ENCODE measurements at regions of chr11 and their contacts with region 1.

Region 1: GRCh38 chr11:12802418-12803085 is 128.3 kb downstream of the TEAD1 start:
- DNase-seq: peak; percentile 98 to 99
- H3K4me3 ChIP-seq: peak overlapping the region; percentile 13
- H3K4me3 Mint-ChIP-seq: peak overlapping the region; percentile 71
- H3K27ac Mint-ChIP-seq: peak overlapping the region; percentile 98
- H3K4me1 ChIP-seq: peaks cover 86% of the 10 kb centered on the region
- H3K4me1 Mint-ChIP-seq: peaks cover 89% of the 10 kb centered on the region
- H3K27me3 ChIP-seq: no peaks in the 10 kb centered on the region
- H3K27me3 Mint-ChIP-seq: no peaks in the 10 kb centered on the region
- CTCF ChIP-seq: no peak

Region 2: GRCh38 chr11:12673924-12674570 is 128.5 kb before region 1 on chr11 and contains the start of gene TEAD1:
- CTCF ChIA-PET with region 1: no interaction called
- POLR2A ChIA-PET with region 1: interaction called, 3 read pairs
- intact Hi-C with region 1: loop called (anchors 2 kb)
- DNase-seq: peak; percentile 97 to 100
- H3K4me3 ChIP-seq: peak within 1 kb of the TSS; percentile 81
- H3K4me3 Mint-ChIP-seq: peak within 1 kb of the TSS; percentile 79
- H3K27ac Mint-ChIP-seq: peak within 1 kb of the TSS; percentile 91
- H3K4me1 ChIP-seq: peaks cover 20% of the 10 kb centered on the region; the same call in 1 of the 2 replicates
- H3K4me1 Mint-ChIP-seq: peaks cover 32% of the 10 kb centered on the region
- H3K27me3 ChIP-seq: no peaks in the 10 kb centered on the region
- H3K27me3 Mint-ChIP-seq: no peaks in the 10 kb centered on the region
- CTCF ChIP-seq: no peak
- total RNA-seq, gene TEAD1: 134 and 144 TPM in 2 replicates

Region 3: DNA sequence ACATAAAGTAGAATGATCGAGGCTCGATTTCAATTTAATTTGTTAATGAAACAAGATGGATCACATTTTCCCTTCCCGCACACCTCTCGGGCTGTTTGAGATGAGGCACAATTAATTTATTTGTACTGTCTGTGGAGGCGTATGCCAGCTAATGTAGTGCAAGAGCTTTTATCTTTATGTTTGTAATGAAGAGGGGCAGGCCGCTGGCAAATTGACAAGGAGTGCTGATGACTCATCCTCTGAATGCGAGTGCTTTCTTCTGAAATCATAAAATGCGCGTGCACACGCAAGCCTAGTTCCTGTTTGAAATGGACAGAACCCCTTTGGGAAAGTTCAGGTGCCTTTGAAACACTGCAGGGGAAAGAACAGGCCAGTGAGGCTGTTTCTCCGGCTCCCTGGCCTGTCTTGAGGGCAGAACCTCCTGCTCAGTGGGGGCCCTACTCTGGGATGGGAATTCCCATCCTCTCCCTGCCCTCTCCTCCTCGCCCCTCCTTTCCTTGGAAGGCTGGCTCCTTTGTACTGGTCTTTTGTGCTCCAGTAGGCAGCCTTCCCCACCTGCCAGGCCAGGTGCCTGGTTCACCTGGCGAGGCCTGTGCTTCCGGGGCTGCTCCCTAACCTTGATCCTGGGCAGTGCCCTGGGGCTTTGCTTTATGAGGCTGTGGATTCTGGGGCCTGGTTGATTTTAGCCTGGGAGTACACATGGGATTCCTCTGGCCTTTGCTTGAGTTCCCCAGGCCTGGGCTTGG is 78.1 kb before region 1 on chr11:
- CTCF ChIA-PET with region 1: interaction called, 5 read pairs
- POLR2A ChIA-PET with region 1: no interaction called
- intact Hi-C with region 1: loop called (anchors 1 kb)
- DNase-seq: peak; percentile 36 to 61
- H3K4me3 ChIP-seq: no peak overlapping the region
- H3K4me3 Mint-ChIP-seq: peak overlapping the region; percentile 78
- H3K27ac Mint-ChIP-seq: peak overlapping the region; percentile 96
- H3K4me1 ChIP-seq: peaks cover 76% of the 10 kb centered on the region
- H3K4me1 Mint-ChIP-seq: peaks cover 82% of the 10 kb centered on the region
- H3K27me3 ChIP-seq: no peaks in the 10 kb centered on the region
- H3K27me3 Mint-ChIP-seq: no peaks in the 10 kb centered on the region
- CTCF ChIP-seq: no peak

Region 4: DNA sequence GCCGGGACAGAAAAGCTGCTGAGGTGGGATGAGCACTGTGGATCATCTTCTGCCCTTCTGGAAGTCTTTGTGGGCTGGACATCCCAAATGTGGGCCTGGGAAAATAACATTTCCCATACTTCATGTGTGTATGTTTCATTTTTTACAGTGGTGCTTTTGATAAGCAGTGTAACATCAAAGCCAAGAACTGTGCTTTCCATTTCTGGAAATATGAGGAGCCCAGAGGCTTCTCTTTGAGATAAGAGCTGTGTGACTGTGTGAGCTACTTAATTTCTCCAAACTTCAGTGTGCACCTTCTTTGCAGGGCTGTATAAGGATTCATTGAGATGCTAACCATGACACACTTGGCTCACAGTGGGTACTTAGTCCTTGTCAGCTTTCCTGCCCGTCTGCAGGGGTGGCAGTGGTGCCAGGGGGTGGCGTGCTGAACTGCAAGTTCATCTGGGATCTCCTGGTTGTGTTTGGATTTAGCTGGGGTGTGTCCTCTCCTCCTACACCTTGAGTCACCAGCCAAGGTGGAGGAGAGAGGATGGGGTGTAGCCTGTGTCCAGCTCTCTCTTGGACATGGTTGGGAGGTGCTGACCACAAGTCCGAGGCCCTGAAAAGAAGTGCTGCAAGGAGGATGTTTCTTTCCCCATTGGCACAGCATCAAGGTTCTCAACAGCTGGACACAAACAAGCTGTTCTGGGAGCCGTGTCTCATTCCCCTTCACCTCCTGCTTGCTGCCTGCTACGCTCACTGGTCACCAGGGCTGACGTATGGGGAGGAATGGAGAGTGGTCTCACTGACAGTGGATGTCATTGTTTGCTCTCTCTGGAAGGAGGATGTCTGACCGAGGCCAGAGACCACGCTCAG is 11.0 kb after region 1 on chr11:
- CTCF ChIA-PET with region 1: interaction called, 3 read pairs
- POLR2A ChIA-PET with region 1: interaction called, 11 read pairs
- intact Hi-C with region 1: no loop called
- DNase-seq: no peak
- H3K4me3 ChIP-seq: no peak overlapping the region
- H3K4me3 Mint-ChIP-seq: peak overlapping the region; percentile 60
- H3K27ac Mint-ChIP-seq: peak overlapping the region; percentile 88
- H3K4me1 ChIP-seq: peaks cover 70% of the 10 kb centered on the region
- H3K4me1 Mint-ChIP-seq: peaks cover 48% of the 10 kb centered on the region
- H3K27me3 ChIP-seq: no peaks in the 10 kb centered on the region
- H3K27me3 Mint-ChIP-seq: no peaks in the 10 kb centered on the region
- CTCF ChIP-seq: no peak

Region 5: DNA sequence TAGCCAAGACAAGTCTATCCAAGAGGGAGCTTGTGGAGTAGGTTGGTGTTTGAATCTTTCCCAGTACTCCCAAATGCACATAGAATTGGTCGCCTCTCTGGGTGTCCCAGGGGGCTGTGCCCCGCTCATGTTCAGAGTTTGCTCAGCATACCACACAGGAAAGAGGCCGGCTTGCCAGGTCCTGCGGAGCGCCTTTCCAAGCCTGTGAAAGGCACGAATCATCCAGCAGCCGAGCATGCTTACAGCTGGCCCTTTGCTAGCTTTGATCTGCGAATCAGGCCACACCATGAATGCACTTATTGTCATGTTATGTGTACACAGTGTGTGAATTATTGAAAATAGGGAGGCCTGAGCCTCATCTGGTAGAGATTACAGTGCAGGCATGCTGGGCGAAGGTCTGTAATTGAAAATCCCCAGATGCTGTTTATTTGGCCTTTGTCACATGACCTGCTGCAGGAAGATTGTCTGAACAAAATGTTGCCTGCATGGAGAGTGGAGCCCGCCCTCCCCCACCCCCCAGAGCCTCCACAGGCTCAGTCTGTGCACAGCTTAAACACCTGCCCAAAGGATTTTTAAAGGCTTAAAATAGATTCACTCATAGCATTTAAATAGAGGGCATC is 43.3 kb after region 1 on chr11:
- CTCF ChIA-PET with region 1: no interaction called
- POLR2A ChIA-PET with region 1: interaction called, 7 read pairs
- intact Hi-C with region 1: loop called (anchors 1 kb)
- DNase-seq: peak; percentile 79 to 90
- H3K4me3 ChIP-seq: no peak overlapping the region
- H3K4me3 Mint-ChIP-seq: peak overlapping the region; percentile 62
- H3K27ac Mint-ChIP-seq: peak overlapping the region; percentile 93
- H3K4me1 ChIP-seq: peaks cover 45% of the 10 kb centered on the region
- H3K4me1 Mint-ChIP-seq: peaks cover 19% of the 10 kb centered on the region
- H3K27me3 ChIP-seq: no peaks in the 10 kb centered on the region
- H3K27me3 Mint-ChIP-seq: no peaks in the 10 kb centered on the region
- CTCF ChIP-seq: no peak